Psoas muscle (tissue), 8 donors: ENCODE measurements at regions of chr12 and their contacts with region 1.

Region 1: GRCh38 chr12:96578526-96579125 is 89.2 kb downstream of the CFAP54 start:
- DNase-seq: no peak
- ATAC-seq: peak in 1 of 4 donors; percentile 48
- H3K4me3 ChIP-seq: no peak overlapping the region
- H3K27ac ChIP-seq: no peak overlapping the region
- H3K4me1 ChIP-seq: no peaks in the 10 kb centered on the region
- H3K27me3 ChIP-seq: no peaks in the 10 kb centered on the region
- CTCF ChIP-seq: peak; percentile 65

Region 2: DNA sequence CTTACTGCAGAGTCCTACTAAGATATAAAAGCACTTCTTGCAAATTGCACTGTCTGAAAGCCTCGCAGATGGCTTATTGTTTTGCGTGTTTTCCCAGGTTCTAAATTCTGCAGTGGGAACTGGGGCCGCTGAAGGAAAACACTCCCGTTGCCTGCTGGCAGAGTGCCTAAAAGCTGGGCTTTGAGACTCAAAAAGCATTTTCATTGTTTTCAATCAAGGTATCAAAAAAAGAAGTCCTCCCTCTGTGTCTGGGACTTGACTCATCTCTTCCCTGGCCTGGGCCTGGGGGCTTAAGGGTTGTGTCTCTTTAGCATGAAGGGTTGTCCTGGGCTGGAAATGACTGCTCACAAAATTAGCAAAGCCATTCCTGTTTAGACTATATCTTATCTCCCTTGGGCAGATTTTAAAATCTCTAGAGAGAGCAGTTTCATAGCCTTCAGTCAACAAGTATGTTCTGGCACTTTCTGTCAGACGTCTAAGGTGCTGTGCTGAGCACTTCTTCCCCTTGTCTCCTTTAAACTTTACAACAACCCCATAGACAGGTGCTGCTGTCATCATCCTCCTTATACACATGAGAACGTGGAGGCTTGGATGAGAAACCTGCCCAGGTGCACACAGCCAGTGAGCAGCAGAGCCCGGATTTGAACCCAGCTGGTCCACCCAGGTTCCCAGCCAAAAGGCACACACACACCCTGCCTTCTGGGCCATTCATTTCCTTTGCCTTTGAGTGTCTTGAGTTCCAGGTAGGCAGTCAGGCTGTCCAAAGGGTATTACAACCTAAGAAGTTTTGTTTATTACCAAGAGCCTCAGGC is 353.4 kb before region 1 on chr12:
- intact Hi-C with region 1: no loop called
- DNase-seq: no peak
- ATAC-seq: no peak
- H3K4me3 ChIP-seq: no peak overlapping the region
- H3K27ac ChIP-seq: no peak overlapping the region
- H3K4me1 ChIP-seq: no peaks in the 10 kb centered on the region
- H3K27me3 ChIP-seq: peaks cover 0 to 7% (median 0%) of the 10 kb centered on the region in 3 donors
- CTCF ChIP-seq: no peak

Region 3: DNA sequence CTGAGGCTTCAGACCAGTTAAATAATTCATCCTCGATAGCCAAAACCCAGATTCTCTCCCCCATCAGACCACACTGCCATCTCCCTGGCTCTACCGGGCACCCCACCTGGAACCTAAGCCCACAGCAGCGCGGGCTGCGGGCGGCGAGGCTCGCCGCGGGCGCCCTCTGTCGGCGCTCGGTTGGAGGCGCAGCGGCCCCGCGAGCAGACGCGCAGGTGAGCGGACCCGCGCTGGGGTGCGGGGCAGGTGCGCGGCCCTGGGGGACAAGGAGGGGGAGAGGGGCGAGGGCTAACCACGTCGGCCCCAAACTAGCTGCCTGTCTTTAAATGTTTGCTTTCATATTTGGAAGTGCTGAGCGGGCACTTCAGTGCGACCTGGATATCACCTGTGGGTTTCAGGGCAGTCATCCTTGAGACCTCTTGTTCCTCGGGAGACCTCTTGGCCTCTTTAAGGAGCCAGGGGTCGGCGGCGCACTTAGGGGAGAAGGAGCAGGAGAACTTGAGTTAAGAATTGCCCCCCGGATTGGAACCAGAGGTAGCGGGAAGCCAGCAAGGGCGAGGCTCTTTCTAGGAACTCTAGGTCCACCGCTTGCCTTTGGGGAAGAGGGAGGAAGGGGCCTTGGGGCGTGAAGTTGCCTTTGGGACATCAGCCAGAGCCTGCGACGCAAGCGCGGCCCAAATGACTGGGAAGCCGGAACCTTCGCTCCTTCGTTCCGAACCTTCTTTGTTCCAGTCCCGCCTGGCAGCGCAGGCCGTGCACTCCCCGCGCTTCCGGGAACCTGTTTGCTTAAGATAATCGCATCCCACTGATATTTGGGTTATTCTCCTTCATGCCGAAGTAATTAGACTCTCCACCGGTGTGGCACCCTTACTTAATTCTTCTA is 407.1 kb after region 1 on chr12:
- intact Hi-C with region 1: loop called in 1 of 2 experiments (anchors 10 kb)
- DNase-seq: peak in 1 of 2 donors; percentile 47
- ATAC-seq: peak in 3 of 4 donors; percentile 38 to 62 (median 56)
- H3K4me3 ChIP-seq: peak overlapping the region; percentile 56
- H3K27ac ChIP-seq: no peak overlapping the region
- H3K4me1 ChIP-seq: no peaks in the 10 kb centered on the region
- H3K27me3 ChIP-seq: peaks cover 0 to 18% (median 2%) of the 10 kb centered on the region in 3 donors
- CTCF ChIP-seq: peak; percentile 67

Region 4: DNA sequence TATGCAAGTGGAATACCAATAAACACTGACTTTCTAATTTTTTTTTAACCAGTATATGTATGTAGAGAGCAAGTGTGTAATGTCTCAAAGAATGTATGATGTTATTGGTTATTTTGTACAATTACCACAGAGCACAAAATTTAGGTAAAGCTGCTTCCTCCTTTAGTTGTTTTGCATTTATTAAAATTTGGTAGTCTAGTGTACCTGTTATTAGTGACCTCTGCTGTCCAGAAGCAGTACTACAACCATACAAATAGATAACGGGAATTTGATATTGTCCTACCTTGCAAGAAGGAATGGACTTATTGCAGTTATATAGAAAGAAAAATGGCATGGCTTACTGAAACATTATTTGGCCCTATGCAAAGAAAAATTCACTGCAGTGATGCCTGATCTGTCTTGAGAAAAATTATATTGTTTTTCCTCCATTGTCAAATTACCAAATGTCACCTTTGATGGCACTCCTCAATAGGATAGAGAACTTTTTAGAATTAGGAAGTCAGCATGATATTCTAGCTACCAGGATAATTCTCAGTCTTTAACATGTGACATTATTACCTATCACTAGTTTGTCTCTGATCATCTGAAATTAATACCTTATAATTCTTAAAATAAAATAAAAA is 730.1 kb after region 1 on chr12:
- intact Hi-C with region 1: loop called (anchors 5 kb)
- DNase-seq: no peak
- ATAC-seq: no peak
- H3K4me3 ChIP-seq: no peak overlapping the region
- H3K27ac ChIP-seq: no peak overlapping the region
- H3K4me1 ChIP-seq: no peaks in the 10 kb centered on the region
- H3K27me3 ChIP-seq: peaks cover 0 to 2% (median 0%) of the 10 kb centered on the region in 3 donors
- CTCF ChIP-seq: peak; percentile 66

Region 5: DNA sequence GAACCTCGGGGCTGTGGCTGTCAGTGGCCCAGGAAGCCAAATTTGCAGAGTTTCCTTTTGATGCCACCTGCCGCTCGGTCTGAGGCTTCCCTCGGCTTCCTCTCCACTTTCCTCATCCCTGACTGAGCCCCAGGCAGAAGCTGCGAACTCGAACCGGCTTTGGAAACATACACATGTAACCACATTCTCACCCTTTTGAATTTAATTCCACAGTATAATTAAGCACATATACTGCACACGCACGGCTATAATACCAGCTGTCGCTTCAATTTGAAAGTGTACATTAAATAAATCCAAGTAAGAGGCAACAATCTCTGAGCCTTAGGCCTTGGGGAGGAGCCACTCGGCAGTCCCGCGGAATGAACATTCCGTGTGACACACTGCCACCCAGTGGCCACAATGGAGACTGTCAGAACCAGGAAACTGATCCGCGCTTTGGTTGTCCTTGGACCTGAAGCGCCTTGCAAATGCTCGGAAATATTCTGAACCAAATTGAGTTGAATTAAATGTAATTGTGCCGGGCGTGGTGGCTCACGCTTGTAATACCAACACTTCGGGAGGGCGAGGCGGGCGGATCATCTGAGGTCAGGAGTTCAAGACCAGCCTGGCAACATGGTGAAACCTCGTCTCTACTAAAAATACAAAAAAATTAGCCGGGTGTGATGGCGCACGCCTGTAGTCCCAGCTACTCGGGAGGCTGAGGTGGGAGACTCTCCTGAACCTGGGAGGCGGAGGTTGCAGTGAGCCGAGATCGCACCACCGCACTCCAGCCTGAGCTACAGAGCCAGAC is 1818.9 kb after region 1 on chr12:
- intact Hi-C with region 1: loop called (anchors 5 kb)
- DNase-seq: peak; percentile 70 to 85
- ATAC-seq: peak; percentile 90 to 99 (median 94)
- H3K4me3 ChIP-seq: peak overlapping the region; percentile 51
- H3K27ac ChIP-seq: no peak overlapping the region
- H3K4me1 ChIP-seq: no peaks in the 10 kb centered on the region
- H3K27me3 ChIP-seq: no peaks in the 10 kb centered on the region
- CTCF ChIP-seq: peak; percentile 94